ENCODE measurements at regions of chr5 and their contacts with region 1.

Region 1: DNA sequence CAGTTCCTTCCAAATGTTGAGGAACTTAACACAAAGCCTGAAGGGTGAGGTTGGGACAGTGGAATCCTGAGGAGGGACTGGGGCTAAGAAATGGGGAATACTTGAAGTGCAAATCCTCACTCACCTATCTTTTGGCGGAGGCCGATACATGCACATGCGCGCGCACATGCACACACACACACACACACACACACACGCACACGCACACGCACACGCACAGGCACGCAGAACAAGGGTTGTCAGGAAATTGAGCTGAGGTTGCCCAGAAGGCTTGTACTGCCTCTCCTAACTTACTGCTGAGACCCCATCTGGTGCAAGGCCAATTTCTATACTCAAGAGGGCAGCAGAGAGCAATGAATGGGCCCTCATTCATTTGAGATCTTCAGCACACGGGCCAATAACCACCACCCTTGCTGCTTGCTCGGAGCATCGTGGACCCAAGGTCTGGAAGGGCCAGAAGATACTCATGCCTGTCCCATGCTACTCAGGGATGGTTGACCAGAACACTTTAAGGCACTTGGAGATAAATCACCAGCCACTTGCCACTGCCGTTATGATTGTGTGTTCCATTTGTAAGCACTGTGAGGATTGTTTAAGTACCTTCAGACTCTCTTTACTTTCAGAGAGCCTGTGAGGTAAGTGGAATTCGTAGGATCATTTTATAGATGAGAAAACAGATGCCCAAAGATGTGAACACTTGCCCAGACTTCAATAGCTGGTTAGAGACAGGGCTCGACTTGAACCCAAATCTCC is 21.5 kb downstream of the BTF3 start:
- DNase-seq: peak; percentile 82
- H3K4me3 Mint-ChIP-seq: no peak overlapping the region
- H3K27ac Mint-ChIP-seq: no peak overlapping the region
- H3K4me1 Mint-ChIP-seq: peaks cover 2% of the 10 kb centered on the region
- H3K27me3 Mint-ChIP-seq: no peaks in the 10 kb centered on the region

Region 2: GRCh38 chr5:73540192-73540591 is 20.5 kb after region 1 on chr5:
- CTCF ChIA-PET with region 1: interaction called, 105 read pairs
- intact Hi-C with region 1: loop called (anchors 1 kb)
- DNase-seq: no peak
- H3K4me3 Mint-ChIP-seq: no peak overlapping the region
- H3K27ac Mint-ChIP-seq: no peak overlapping the region
- H3K4me1 Mint-ChIP-seq: no peaks in the 10 kb centered on the region
- H3K27me3 Mint-ChIP-seq: peaks cover 9% of the 10 kb centered on the region

Region 3: GRCh38 chr5:73565139-73565968 is 45.6 kb after region 1 on chr5 and contains the starts of genes ANKRA2 and UTP15:
- CTCF ChIA-PET with region 1: no interaction called
- intact Hi-C with region 1: loop called (anchors 1 kb)
- DNase-seq: peak; percentile 99
- H3K4me3 Mint-ChIP-seq: peak within 1 kb of the TSS; percentile 99
- H3K27ac Mint-ChIP-seq: peak within 1 kb of the TSS; percentile 99
- H3K4me1 Mint-ChIP-seq: peaks cover 38% of the 10 kb centered on the region
- H3K27me3 Mint-ChIP-seq: no peaks in the 10 kb centered on the region
- total RNA-seq, gene ANKRA2: 26.5 to 26.9 TPM
- total RNA-seq, gene UTP15: 25.3 to 28.5 TPM

Region 4: GRCh38 chr5:73792687-73793320 is 273.1 kb after region 1 on chr5:
- CTCF ChIA-PET with region 1: interaction called, 5 read pairs
- intact Hi-C with region 1: loop called (anchors 1 kb)
- DNase-seq: peak; percentile 80
- H3K4me3 Mint-ChIP-seq: no peak overlapping the region
- H3K27ac Mint-ChIP-seq: no peak overlapping the region
- H3K4me1 Mint-ChIP-seq: peaks cover 9% of the 10 kb centered on the region
- H3K27me3 Mint-ChIP-seq: peaks cover 30% of the 10 kb centered on the region

Region 5: DNA sequence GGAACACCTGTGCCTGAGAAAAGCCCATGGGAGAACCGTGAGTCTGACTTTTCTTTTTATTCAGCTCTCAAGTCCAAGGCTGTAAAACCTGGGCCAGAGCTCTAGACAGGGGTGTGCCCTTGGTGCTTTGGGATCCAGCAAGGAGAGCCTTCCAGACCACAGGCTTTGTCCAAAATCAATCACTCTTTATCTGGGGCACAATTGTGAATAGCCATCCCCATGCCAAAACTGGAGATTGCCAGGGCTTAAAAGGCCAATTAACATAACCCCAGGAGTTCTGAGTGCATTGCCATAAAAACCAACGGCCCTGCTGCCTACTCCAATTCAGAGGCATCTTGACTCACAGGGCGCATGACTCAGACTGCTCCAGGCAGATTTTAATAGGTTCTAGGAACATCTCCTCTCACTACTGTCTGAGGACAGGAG is 498.1 kb after region 1 on chr5:
- CTCF ChIA-PET with region 1: no interaction called
- intact Hi-C with region 1: no loop called
- DNase-seq: no peak
- H3K4me3 Mint-ChIP-seq: no peak overlapping the region
- H3K27ac Mint-ChIP-seq: no peak overlapping the region
- H3K4me1 Mint-ChIP-seq: no peaks in the 10 kb centered on the region
- H3K27me3 Mint-ChIP-seq: peaks cover 27% of the 10 kb centered on the region